Activated CD4-positive, alpha-beta memory T cell treated with anti-CD3 and anti-CD28 coated beads for 36 hours (primary cell): ENCODE measurements at regions of chr11 and their contacts with region 1.

Region 1: DNA sequence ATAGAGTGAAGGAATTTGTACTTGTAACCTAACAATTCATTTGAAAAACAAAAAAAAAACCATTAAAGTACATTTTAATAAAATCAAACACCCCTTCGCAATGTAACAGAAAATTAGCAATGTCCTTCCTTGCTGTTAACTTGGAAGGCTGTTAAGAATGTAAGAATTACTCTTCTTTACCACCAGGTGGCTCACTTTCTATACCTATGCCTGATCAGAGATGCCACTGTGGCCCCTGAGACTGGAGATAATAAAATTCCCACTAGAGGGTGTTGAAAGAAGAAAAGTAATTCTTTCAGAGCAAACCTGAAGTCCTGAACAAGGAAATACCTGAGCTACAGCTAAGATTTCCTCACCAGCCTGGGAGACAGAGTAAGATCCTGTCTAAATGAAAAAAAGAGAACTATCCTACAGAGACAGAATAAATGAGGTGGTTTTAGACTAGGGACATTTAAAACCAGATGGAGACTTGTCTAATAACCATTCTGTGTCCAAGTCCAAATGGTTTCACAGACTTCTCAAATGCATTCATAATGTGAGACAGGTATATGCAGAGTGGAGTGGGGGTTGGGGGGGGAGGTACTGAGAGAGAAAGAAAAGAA is 1089.3 kb downstream of the FAM181B start:
- DNase-seq: peak; percentile 11
- H3K4me3 Mint-ChIP-seq: no peak overlapping the region
- H3K27ac Mint-ChIP-seq: no peak overlapping the region
- H3K4me1 Mint-ChIP-seq: no peaks in the 10 kb centered on the region
- H3K27me3 Mint-ChIP-seq: peaks cover 16% of the 10 kb centered on the region

Region 2: GRCh38 chr11:81772166-81772565 is 127.8 kb after region 1 on chr11:
- CTCF ChIA-PET with region 1: no interaction called
- POLR2A ChIA-PET with region 1: no interaction called
- intact Hi-C with region 1: no loop called
- DNase-seq: no peak
- H3K4me3 Mint-ChIP-seq: no peak overlapping the region
- H3K27ac Mint-ChIP-seq: no peak overlapping the region
- H3K4me1 Mint-ChIP-seq: no peaks in the 10 kb centered on the region
- H3K27me3 Mint-ChIP-seq: no peaks in the 10 kb centered on the region

Region 3: DNA sequence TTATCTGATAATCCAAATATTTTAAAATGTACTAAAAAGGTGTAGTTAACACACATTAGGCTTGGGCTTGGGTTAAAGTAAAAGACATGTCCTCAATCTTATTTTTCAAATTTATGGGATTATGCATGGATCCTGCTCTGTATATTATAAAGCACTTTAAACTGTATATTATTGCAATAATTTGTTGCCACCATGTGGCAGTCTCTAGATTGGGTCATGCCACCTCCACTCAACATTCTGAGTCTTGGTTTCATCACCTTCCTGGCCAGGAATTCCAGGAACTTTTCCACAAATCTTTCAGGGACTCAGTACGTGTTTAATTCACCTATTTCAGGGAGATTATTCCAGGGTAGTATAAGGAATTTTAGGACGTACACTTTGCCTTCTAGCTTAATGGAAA is 393.8 kb after region 1 on chr11:
- CTCF ChIA-PET with region 1: interaction called, 3 read pairs
- POLR2A ChIA-PET with region 1: interaction called, 5 read pairs
- intact Hi-C with region 1: loop called (anchors 1 kb)
- DNase-seq: no peak
- H3K4me3 Mint-ChIP-seq: no peak overlapping the region
- H3K27ac Mint-ChIP-seq: no peak overlapping the region
- H3K4me1 Mint-ChIP-seq: no peaks in the 10 kb centered on the region
- H3K27me3 Mint-ChIP-seq: no peaks in the 10 kb centered on the region

Region 4: DNA sequence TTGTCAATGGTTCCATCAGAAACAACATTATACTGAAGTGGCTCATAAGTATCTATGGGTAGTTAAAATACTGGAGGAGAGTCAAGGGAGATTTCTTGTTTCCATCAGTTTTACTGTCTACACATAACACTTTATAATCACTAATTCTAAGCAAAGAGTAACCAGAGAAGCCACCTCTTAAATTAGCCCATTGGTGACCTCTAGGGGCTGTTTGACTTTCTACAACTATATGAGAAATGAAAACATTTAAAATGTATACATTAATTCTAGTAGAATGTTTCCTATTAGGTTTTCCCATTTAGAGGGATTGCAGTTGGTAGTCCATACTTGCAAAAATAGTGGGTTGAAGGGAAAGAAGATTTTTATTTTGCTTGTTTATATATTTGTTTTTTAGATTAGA is 585.0 kb after region 1 on chr11:
- CTCF ChIA-PET with region 1: interaction called, 44 read pairs
- POLR2A ChIA-PET with region 1: no interaction called
- intact Hi-C with region 1: loop called (anchors 1 kb)
- DNase-seq: no peak
- H3K4me3 Mint-ChIP-seq: no peak overlapping the region
- H3K27ac Mint-ChIP-seq: no peak overlapping the region
- H3K4me1 Mint-ChIP-seq: no peaks in the 10 kb centered on the region
- H3K27me3 Mint-ChIP-seq: no peaks in the 10 kb centered on the region

Region 5: DNA sequence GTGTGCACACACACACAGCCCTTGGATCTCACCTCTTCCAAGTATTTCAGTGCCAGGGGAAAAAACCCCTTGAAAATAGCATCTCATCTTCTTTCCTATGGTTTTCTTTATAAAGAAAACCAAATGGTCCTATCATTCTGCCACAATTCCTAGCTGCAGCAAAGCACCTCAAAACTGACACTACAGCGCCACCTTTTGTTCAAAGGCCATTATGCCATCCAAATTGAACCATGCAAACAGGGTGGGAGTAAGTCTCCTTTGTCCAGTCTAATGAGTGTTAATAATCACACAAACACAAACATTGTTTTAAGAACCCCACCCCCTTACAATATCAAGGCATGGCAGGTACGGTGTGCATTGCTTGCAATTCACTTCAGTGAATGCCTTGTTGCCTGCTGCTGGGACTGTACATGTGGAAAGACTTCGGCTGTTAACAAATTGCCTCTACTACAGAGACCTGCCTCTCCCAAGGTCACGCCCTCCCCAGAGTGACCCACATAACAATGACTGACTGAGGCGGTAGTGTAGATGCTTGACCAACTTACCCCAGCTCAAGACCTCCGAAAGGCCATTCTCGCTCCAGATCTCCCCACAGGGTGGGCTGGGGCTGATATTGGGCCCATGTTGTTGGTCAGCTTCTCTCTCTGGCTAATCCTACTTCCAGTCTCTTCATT is 1057.6 kb after region 1 on chr11:
- CTCF ChIA-PET with region 1: no interaction called
- POLR2A ChIA-PET with region 1: no interaction called
- intact Hi-C with region 1: loop called (anchors 1 kb)
- DNase-seq: peak; percentile 29
- H3K4me3 Mint-ChIP-seq: no peak overlapping the region
- H3K27ac Mint-ChIP-seq: no peak overlapping the region
- H3K4me1 Mint-ChIP-seq: no peaks in the 10 kb centered on the region
- H3K27me3 Mint-ChIP-seq: peaks cover 3% of the 10 kb centered on the region